Sciatic nerve (tissue), 2 donors: ENCODE measurements at regions of chr19 and their contacts with region 1.

Region 1: DNA sequence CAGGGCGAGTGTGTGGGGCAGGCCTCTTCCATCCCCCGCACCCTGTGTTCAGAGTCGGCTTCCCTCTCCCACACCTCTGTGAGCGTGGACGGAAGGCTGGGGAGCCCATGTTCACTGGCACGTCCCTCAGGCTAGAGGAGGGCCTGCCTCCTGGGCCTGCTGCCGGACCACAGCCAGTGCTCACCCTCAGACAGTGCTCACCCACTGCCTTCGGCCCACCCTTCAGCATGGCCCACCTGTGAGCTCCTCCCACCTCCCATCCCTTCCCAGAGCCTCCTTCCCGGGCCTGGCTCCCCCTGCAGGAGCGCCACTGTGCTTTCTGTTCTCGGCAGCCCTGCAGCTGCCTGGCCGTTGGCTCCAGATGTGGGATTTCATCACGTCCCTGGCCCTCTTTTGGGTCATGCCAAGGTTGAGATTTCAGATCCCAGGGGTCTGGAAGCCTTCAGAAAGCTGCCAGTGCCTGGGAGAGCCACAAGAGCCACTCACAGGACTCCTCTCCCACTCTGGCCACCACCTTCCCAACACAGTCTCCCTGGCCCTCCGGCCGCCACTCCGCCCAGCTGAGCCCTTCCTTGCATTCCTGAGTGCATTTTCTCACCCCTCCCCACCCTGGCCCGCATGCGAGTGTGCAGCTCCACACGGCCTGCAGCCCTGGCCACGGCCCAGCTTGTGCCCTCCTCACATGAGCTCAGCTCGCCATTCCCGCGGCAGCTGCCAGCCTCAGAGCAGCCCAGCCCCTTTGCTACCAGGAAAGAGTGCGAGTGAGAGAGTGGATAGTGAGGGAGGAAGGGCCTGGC is 25.3 kb downstream of the CAPN12 start:
- DNase-seq: no peak
- ATAC-seq: peak; percentile 23

Region 2: DNA sequence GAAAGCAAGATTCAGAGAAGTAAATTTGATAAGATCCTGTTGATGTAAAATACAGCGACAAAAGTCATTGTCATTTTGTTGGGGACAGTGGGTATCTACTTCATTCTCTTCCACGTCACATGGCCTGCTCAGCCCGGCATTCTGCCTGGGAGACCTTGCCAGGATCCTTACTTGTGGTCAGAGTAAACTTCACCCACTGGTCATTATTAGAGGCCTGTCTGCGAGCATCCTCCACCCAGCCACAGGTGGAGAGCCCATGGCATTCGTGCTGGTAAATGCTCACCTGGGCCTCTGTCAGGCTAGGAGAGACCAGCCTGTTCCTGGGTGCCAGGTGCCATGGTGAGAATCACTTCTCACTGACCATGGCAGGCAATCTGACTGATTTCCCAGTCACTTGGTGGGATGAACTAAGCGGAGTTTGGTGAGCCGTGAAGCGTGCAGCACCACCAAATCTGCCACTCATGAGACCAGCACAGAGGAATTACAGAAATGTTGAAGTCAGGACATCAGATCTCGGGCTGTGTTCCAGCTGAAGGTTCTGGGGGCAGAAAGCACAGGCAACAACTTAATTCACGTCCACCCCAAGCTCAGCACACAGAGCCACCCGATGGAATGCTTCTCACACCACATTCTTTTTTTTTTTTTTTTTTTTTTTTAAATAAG is 704.9 kb before region 1 on chr19:
- intact Hi-C with region 1: loop called (anchors 5 kb)
- DNase-seq: no peak
- ATAC-seq: no peak